ENCODE measurements at regions of chr2 and their contacts with region 1.

Region 1: DNA sequence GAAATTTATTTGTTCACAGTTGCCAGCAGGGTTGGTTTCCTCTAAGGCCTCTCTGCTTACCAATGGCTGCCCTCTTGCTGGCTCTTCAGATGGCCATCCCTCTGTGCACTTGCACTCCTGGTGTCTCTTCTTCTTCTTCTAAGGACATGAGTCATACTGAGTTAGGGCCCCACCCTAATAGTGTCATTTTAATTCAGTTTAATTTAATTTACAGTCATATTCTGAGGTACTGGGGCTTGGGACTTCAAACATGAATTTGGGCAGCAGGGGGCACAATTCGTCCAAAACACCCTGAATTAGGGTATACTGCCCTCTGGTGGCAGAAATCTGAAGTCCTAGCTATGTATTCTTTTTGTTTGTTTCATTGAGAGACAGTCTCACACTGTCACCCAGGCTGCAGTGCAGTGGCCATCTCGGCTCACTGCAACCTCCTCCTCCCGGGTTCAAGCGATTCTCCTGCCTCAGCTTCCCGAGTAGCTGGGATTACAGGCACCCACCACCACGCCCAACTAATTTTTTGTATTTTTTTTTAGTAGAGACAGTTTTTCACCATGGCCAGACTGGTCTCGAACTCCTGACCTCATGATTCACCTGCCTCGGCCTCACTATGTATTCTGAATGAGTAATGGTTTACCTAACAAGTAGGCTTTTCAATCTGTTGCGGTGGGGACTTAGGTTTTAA is 19.8 kb downstream of the SLC4A1AP start:
- DNase-seq: peak; percentile 53 to 97 (median 81)
- ATAC-seq: peak; percentile 82 to 94 (median 90)
- H3K4me3 ChIP-seq: no peak overlapping the region
- H3K4me3 Mint-ChIP-seq: no peak overlapping the region
- H3K27ac ChIP-seq: peak overlapping the region; percentile 45
- H3K27ac Mint-ChIP-seq: peak overlapping the region; percentile 62 to 78
- H3K4me1 ChIP-seq: peaks cover 8 to 23% of the 10 kb centered on the region in 2 experiments
- H3K4me1 Mint-ChIP-seq: peaks cover 15 to 25% (median 15%) of the 10 kb centered on the region in 3 donors
- H3K27me3 ChIP-seq: no peaks in the 10 kb centered on the region
- H3K27me3 Mint-ChIP-seq: no peaks in the 10 kb centered on the region

Region 2: GRCh38 chr2:27428213-27428977 is 255.1 kb before region 1 on chr2 and contains the start of gene NRBP1:
- CTCF ChIA-PET with region 1: interaction called in 1 of 2 experiments, 10 read pairs
- POLR2A ChIA-PET with region 1: no interaction called
- DNase-seq: peak; percentile 76 to 95 (median 87)
- ATAC-seq: peak; percentile 92 to 97 (median 94)
- H3K4me3 ChIP-seq: peak within 1 kb of the TSS; percentile 75 to 94
- H3K4me3 Mint-ChIP-seq: peak within 1 kb of the TSS; percentile 97 to 98 (median 98)
- H3K27ac ChIP-seq: peak within 1 kb of the TSS; percentile 88
- H3K27ac Mint-ChIP-seq: peak within 1 kb of the TSS; percentile 98
- H3K4me1 ChIP-seq: peaks cover 14 to 38% of the 10 kb centered on the region in 2 experiments
- H3K4me1 Mint-ChIP-seq: peaks cover 40 to 44% (median 44%) of the 10 kb centered on the region in 3 donors
- H3K27me3 ChIP-seq: no peaks in the 10 kb centered on the region
- H3K27me3 Mint-ChIP-seq: no peaks in the 10 kb centered on the region
- total RNA-seq, gene NRBP1: 99.1 to 187 (median 109) TPM

Region 3: GRCh38 chr2:27596627-27597026 is 86.9 kb before region 1 on chr2:
- CTCF ChIA-PET with region 1: interaction called in 1 of 2 experiments, 10 read pairs
- POLR2A ChIA-PET with region 1: no interaction called
- DNase-seq: no peak
- ATAC-seq: no peak
- H3K4me3 ChIP-seq: no peak overlapping the region
- H3K4me3 Mint-ChIP-seq: no peak overlapping the region
- H3K27ac ChIP-seq: no peak overlapping the region
- H3K27ac Mint-ChIP-seq: peak overlapping the region in 1 of 2 donors; percentile 58
- H3K4me1 ChIP-seq: peaks cover 0 to 7% of the 10 kb centered on the region in 2 experiments
- H3K4me1 Mint-ChIP-seq: peaks cover 37 to 49% (median 44%) of the 10 kb centered on the region in 3 donors
- H3K27me3 ChIP-seq: no peaks in the 10 kb centered on the region
- H3K27me3 Mint-ChIP-seq: no peaks in the 10 kb centered on the region

Region 4: DNA sequence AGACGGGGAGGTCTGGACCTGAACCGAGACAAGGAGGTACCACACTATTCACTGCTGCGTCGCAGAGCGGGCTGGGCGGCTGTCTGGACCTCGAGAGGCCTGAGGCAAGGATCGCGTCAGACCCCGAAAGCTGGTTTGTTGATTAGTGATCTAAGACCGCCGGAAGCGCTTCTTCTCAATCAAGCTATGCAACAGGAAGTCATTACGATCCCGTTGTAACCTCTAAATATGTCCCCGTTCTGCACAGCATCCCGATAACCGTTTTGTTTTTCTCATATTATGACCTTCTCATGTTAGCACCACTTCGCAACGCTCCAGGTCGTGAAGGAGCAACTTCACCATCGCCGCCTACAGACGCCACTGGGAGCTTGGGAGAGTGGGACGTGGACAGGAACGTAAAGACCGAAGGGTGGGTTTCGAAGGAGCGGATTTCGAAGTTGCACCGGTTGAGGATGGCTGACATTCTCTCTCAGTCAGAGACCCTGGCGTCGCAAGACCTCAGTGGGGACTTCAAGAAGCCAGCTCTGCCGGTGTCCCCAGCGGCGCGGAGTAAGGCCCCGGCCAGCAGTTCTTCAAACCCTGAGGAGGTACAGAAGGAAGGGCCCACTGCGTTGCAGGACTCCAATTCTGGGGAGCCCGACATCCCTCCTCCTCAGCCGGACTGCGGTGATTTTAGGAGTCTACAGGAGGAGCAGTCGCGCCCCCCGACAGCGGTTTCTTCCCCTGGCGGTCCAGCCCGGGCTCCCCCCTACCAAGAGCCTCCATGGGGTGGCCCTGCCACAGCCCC is 19.9 kb before region 1 on chr2 and contains the starts of genes SLC4A1AP and SUPT7L:
- CTCF ChIA-PET with region 1: interaction called in 1 of 2 experiments, 23 read pairs
- POLR2A ChIA-PET with region 1: interaction called, 3 to 7 read pairs
- DNase-seq: peak; percentile 40 to 88 (median 69)
- ATAC-seq: peak; percentile 79 to 85 (median 82)
- H3K4me3 ChIP-seq: peak within 1 kb of the TSS; percentile 87 to 99
- H3K4me3 Mint-ChIP-seq: peak within 1 kb of the TSS; percentile 93 to 100 (median 98)
- H3K27ac ChIP-seq: peak within 1 kb of the TSS; percentile 87
- H3K27ac Mint-ChIP-seq: peak within 1 kb of the TSS; percentile 100
- H3K4me1 ChIP-seq: peaks cover 13 to 22% of the 10 kb centered on the region in 2 experiments
- H3K4me1 Mint-ChIP-seq: peaks cover 51 to 60% (median 56%) of the 10 kb centered on the region in 3 donors
- H3K27me3 ChIP-seq: no peaks in the 10 kb centered on the region
- H3K27me3 Mint-ChIP-seq: peaks cover 0 to 2% of the 10 kb centered on the region in 2 donors
- total RNA-seq, gene SLC4A1AP: 21.1 to 24.2 (median 21.8) TPM
- total RNA-seq, gene SUPT7L: 39.2 to 53.2 (median 39.3) TPM